Activated CD4-positive, alpha-beta memory T cell treated with anti-CD3 and anti-CD28 coated beads for 36 hours (primary cell): ENCODE measurements at regions of chr1 and their contacts with region 1.

Region 1: GRCh38 chr1:218050386-218050785 is 234.7 kb upstream of the RRP15 start:
- DNase-seq: no peak
- H3K4me3 Mint-ChIP-seq: no peak overlapping the region
- H3K27ac Mint-ChIP-seq: no peak overlapping the region
- H3K4me1 Mint-ChIP-seq: no peaks in the 10 kb centered on the region
- H3K27me3 Mint-ChIP-seq: no peaks in the 10 kb centered on the region

Region 2: DNA sequence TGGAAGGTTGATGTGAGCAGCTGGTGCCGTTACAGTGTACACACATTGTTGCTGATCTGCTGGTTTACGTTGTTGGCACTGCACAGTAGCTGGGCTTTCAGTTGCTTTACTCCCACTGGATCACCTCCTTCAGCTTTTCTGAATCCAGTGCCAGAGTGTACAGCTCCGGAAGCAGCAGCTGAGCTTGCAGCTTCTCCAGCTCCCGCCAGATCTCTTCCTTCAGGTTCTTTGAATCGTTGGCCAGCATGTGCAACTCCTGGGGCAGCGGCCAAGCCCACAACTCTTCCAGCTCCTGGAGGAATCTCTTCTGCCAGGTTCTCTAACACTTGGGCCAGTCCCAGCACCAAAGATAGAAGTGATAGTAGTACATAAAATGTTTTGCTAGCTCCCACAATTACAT is 85.0 kb after region 1 on chr1:
- CTCF ChIA-PET with region 1: no interaction called
- POLR2A ChIA-PET with region 1: no interaction called
- intact Hi-C with region 1: loop called (anchors 5 kb)
- DNase-seq: no peak
- H3K4me3 Mint-ChIP-seq: no peak overlapping the region
- H3K27ac Mint-ChIP-seq: no peak overlapping the region
- H3K4me1 Mint-ChIP-seq: no peaks in the 10 kb centered on the region
- H3K27me3 Mint-ChIP-seq: no peaks in the 10 kb centered on the region

Region 3: GRCh38 chr1:218182455-218182854 is 132.1 kb after region 1 on chr1:
- CTCF ChIA-PET with region 1: no interaction called
- POLR2A ChIA-PET with region 1: no interaction called
- intact Hi-C with region 1: no loop called
- DNase-seq: no peak
- H3K4me3 Mint-ChIP-seq: no peak overlapping the region
- H3K27ac Mint-ChIP-seq: no peak overlapping the region
- H3K4me1 Mint-ChIP-seq: no peaks in the 10 kb centered on the region
- H3K27me3 Mint-ChIP-seq: no peaks in the 10 kb centered on the region